ENCODE measurements at regions of chr18 and their contacts with region 1.

Region 1: DNA sequence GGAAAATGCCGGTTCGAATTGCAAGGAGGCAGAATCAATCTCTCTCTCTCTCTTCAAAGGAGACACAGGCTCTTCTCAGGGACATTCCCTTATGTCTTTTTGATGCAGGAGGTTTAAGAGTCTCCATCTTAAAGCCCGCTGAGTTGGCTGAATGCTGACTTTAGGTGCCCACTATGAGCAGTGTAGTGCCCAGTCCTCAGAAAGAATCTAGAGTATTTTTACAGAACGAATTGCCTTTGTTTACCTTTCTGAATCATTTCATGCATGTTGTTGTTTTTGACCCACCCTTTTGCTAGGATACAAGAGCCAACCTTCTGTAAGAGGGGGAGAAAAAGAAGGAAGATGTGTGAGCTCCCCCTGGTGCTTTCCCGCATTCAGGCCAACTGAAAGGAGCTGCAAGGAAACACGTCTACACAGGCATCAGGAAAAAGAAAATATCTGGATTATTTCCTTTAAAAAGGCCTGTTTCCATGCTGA is 193.5 kb upstream of the TCF4 start:
- DNase-seq: peak; percentile 24 to 63
- ATAC-seq: peak in 7 of 8 donors; percentile 54 to 79 (median 65)
- H3K4me3 ChIP-seq: no peak overlapping the region
- H3K27ac ChIP-seq: peak overlapping the region in 9 of 10 donors; percentile 85 to 97 (median 93)
- H3K4me1 ChIP-seq: peaks cover 0 to 42% (median 28%) of the 10 kb centered on the region in 9 donors
- H3K27me3 ChIP-seq: peaks cover 0 to 8% (median 0%) of the 10 kb centered on the region in 7 donors
- CTCF ChIP-seq: peak; percentile 37 to 78 (median 66)

Region 2: GRCh38 chr18:55096261-55096951 is 685.1 kb before region 1 on chr18:
- intact Hi-C with region 1: loop called in 3 of 10 experiments (anchors 10 kb)
- DNase-seq: peak in 1 of 2 donors; percentile 16
- ATAC-seq: peak in 7 of 8 donors; percentile 38 to 89 (median 86)
- H3K4me3 ChIP-seq: no peak overlapping the region
- H3K27ac ChIP-seq: peak overlapping the region in 1 of 10 donors; percentile 30
- H3K4me1 ChIP-seq: peaks cover 0 to 17% (median 8%) of the 10 kb centered on the region in 9 donors
- H3K27me3 ChIP-seq: no peaks in the 10 kb centered on the region
- CTCF ChIP-seq: peak in 8 of 9 donors; percentile 11 to 62 (median 42)

Region 3: DNA sequence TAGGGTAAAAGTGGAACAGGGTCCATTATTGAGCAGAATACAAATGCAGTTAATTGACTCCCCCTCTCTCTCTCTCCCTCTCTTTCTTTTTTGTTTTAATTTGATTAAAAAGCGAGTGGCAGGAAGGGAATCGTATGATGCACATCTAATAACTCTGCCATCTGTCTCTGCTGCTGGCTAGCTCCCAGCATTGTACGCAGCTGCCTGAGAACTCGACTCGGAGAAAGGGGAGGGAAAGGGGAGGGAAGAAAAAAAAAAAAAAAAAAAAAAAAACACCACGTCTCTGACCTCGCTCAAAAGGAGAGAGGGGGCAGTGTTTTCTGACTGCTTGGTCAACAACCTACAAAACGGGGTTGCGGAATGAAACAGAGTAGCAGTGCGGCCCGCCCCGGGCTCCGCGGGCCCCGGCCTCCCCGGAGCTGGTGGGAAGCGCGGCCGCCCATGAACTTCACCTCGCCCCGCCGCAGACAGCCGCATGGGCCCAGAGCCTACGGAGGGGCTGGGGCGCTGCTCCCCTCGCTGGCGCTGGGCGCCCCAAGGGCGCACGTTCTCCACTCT is 459.3 kb before region 1 on chr18:
- intact Hi-C with region 1: loop called in 1 of 10 experiments (anchors 5 kb)
- DNase-seq: peak; percentile 84 to 91
- ATAC-seq: peak; percentile 80 to 94 (median 88)
- H3K4me3 ChIP-seq: peak overlapping the region; percentile 29 to 79 (median 64)
- H3K27ac ChIP-seq: peak overlapping the region; percentile 87 to 98 (median 94)
- H3K4me1 ChIP-seq: peaks cover 2 to 52% (median 37%) of the 10 kb centered on the region in 9 donors
- H3K27me3 ChIP-seq: no peaks in the 10 kb centered on the region
- CTCF ChIP-seq: peak in 6 of 9 donors; percentile 13 to 52 (median 34)

Region 4: DNA sequence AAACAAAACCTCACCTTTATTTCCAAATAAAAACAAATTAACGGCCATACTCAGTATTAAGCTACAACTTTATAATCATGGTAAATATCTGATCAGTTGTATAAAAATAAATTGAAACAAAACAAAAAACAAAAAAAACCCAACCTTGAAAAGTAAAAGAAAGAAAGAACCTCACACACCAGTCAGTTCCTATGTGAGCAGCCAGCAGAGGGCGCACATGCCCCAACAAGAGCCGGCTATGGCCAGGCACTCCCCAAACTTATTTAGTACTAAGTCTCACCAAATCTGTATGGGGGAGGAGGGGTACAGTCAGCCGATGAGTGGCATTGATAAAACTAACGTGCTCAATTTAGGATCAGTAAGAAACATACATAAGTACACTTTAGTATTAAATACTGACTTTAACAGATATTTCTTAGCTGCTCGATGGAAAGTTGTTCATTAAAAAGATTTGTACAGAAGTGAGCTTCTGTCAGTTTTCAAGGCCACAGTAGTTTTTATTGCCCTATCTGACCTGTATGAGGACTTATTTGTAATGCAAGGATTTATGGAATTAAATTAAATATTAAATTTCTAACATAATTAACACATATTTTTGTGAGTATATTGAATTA is 366.2 kb before region 1 on chr18:
- intact Hi-C with region 1: loop called (anchors 2 to 10 kb)
- DNase-seq: peak; percentile 88 to 91
- ATAC-seq: peak; percentile 87 to 93 (median 90)
- H3K4me3 ChIP-seq: no peak overlapping the region
- H3K27ac ChIP-seq: peak overlapping the region in 5 of 10 donors; percentile 14 to 91 (median 54)
- H3K4me1 ChIP-seq: peaks cover 0 to 78% (median 56%) of the 10 kb centered on the region in 9 donors
- H3K27me3 ChIP-seq: no peaks in the 10 kb centered on the region
- CTCF ChIP-seq: peak; percentile 82 to 98 (median 92)

Region 5: GRCh38 chr18:55509631-55510324 is 271.7 kb before region 1 on chr18:
- intact Hi-C with region 1: loop called in 3 of 10 experiments (anchors 5 to 10 kb)
- DNase-seq: peak in 1 of 2 donors; percentile 76
- ATAC-seq: peak in 6 of 8 donors; percentile 25 to 79 (median 59)
- H3K4me3 ChIP-seq: peak overlapping the region in 8 of 10 donors; percentile 15 to 44 (median 38)
- H3K27ac ChIP-seq: peak overlapping the region; percentile 69 to 95 (median 88)
- H3K4me1 ChIP-seq: peaks cover 0 to 73% (median 46%) of the 10 kb centered on the region in 9 donors
- H3K27me3 ChIP-seq: no peaks in the 10 kb centered on the region
- CTCF ChIP-seq: no peak

Region 6: GRCh38 chr18:55861266-55861665 is 79.7 kb after region 1 on chr18:
- intact Hi-C with region 1: loop called in 1 of 10 experiments (anchors 5 kb)
- DNase-seq: no peak
- ATAC-seq: peak in 2 of 8 donors; percentile 33 to 51
- H3K4me3 ChIP-seq: no peak overlapping the region
- H3K27ac ChIP-seq: no peak overlapping the region
- H3K4me1 ChIP-seq: peaks cover 0 to 30% (median 14%) of the 10 kb centered on the region in 9 donors
- H3K27me3 ChIP-seq: no peaks in the 10 kb centered on the region
- CTCF ChIP-seq: peak in 7 of 9 donors; percentile 38 to 58 (median 45)

Region 7: DNA sequence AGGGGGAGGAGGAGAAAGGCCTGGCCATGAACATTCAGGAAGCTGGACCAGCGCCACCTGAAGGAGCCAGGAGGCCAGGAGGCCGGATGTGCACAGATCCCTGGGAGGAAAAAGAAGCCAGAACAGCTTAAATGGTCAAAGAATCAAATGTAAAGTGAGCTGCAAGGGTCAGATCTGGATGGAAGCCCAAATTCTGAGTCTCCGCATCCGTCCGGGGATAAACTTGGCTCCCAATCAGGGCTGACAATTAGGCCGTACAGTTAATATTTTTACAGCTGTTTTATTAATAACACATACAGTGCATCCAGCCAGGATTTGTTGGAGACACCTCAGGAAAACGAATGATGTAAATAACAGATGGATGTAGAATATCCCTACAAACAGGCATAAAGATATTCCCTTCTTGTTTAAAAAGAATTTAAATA is 301.6 kb after region 1 on chr18:
- intact Hi-C with region 1: loop called in 1 of 10 experiments (anchors 10 kb)
- DNase-seq: peak; percentile 70 to 92
- ATAC-seq: peak; percentile 75 to 94 (median 89)
- H3K4me3 ChIP-seq: no peak overlapping the region
- H3K27ac ChIP-seq: peak overlapping the region; percentile 10 to 78 (median 60)
- H3K4me1 ChIP-seq: peaks cover 8 to 41% (median 32%) of the 10 kb centered on the region in 9 donors
- H3K27me3 ChIP-seq: no peaks in the 10 kb centered on the region
- CTCF ChIP-seq: peak in 6 of 9 donors; percentile 19 to 54 (median 34)